ENCODE measurements at regions of chr9 and their contacts with region 1.

Region 1: DNA sequence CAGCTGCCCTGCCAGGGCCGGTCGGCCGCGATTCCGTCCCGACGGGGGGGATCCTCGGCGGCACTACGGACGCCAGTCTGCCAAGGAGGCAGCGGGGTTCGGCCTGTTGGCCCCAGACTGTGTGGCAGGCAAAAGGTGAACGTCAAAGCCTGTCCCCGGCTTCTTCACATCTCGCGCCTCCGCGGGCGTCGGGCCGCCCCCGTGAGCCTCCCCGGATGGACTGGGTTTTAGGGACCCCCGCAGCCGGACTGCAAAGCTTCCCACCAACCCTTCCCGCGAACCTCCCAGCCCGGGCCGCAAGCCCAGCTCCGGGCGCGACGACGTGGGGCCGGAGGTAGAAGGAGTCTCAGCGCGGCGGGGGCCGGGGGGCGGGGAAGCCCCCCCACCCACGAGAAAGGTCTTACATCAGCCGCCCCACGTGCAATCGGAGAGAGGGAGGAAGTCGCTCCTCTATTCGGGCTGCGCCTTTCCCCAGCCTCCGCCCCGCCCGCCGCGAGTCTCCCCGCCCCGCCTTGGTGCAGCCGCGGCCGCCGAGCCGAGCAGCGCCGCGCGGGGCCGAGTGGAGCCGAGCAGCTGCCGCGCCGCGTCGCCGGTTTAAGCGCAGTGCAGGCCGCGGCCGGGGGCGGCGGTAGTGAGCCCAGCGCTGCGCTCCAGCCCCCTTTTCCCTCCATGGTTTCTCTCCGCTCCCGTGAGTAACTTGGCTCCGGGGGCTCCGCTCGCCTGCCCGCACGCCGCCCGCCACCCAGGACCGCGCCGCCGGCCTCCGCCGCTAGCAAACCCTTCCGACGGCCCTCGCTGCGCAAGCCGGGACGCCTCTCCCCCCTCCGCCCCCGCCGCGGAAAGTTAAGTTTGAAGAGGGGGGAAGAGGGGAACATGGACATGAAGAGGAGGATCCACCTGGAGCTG is at the start of gene ANP32B:
- DNase-seq: peak; percentile 98
- ATAC-seq: peak; percentile 89
- H3K4me3 Mint-ChIP-seq: peak within 1 kb of the TSS; percentile 81
- H3K27ac Mint-ChIP-seq: peak within 1 kb of the TSS; percentile 92
- H3K4me1 Mint-ChIP-seq: peaks cover 49% of the 10 kb centered on the region
- H3K27me3 Mint-ChIP-seq: no peaks in the 10 kb centered on the region
- total RNA-seq, gene ANP32B: 367 to 440 TPM

Region 2: DNA sequence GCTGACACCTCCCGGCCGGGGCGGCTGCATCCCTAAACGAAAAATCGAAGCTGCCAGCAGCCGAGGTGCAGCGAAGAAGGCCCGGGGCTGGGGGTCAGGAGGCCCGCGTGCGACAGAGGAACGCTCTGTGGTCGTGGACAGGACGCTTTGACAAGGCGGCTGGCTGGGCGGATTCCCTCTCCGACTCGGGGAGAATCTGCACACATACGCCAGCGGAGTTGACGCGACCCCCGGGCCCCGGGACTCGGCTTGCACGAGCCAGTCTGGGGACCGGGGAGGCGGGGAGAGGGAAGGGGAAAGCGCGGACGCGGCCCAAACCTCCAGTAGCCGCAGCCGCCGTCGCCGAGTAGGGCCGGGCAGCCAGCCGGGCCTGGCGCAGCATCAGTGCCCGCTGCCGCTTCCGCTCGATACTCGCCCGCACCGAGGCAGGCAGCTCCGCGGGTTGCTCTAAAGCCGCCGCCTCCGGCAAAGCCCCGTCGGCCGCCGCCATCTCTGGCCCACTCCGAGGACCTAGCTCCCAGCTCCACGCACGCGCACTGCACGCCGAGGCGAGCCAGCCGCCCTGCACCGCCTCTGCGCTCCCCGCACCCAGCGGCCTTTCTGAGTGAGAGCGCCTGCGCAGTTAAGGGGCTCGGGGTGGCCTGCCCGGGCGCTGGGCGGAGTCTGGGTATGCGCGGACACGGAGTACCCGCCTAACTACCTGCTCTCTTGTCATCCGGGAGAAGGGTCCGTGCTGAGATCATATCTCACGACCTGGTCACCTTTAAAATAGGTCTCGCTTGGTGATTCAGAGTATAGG is 285.9 kb before region 1 on chr9 and contains the start of gene XPA:
- CTCF ChIA-PET with region 1: no interaction called
- POLR2A ChIA-PET with region 1: no interaction called
- intact Hi-C with region 1: loop called (anchors 1 to 10 kb)
- DNase-seq: peak; percentile 98
- ATAC-seq: peak; percentile 95
- H3K4me3 Mint-ChIP-seq: peak within 1 kb of the TSS; percentile 81
- H3K27ac Mint-ChIP-seq: peak within 1 kb of the TSS; percentile 92
- H3K4me1 Mint-ChIP-seq: peaks cover 45% of the 10 kb centered on the region
- H3K27me3 Mint-ChIP-seq: peaks cover 2% of the 10 kb centered on the region
- total RNA-seq, gene XPA: 8.7 to 11.1 TPM

Region 3: GRCh38 chr9:98007251-98007928 is 24.5 kb after region 1 on chr9:
- CTCF ChIA-PET with region 1: interaction called, 6 read pairs
- POLR2A ChIA-PET with region 1: no interaction called
- intact Hi-C with region 1: loop called in 1 of 2 experiments (anchors 2 kb)
- DNase-seq: no peak
- ATAC-seq: peak; percentile 67
- H3K4me3 Mint-ChIP-seq: no peak overlapping the region
- H3K27ac Mint-ChIP-seq: peak overlapping the region; percentile 53
- H3K4me1 Mint-ChIP-seq: peaks cover 42% of the 10 kb centered on the region
- H3K27me3 Mint-ChIP-seq: no peaks in the 10 kb centered on the region

Region 4: DNA sequence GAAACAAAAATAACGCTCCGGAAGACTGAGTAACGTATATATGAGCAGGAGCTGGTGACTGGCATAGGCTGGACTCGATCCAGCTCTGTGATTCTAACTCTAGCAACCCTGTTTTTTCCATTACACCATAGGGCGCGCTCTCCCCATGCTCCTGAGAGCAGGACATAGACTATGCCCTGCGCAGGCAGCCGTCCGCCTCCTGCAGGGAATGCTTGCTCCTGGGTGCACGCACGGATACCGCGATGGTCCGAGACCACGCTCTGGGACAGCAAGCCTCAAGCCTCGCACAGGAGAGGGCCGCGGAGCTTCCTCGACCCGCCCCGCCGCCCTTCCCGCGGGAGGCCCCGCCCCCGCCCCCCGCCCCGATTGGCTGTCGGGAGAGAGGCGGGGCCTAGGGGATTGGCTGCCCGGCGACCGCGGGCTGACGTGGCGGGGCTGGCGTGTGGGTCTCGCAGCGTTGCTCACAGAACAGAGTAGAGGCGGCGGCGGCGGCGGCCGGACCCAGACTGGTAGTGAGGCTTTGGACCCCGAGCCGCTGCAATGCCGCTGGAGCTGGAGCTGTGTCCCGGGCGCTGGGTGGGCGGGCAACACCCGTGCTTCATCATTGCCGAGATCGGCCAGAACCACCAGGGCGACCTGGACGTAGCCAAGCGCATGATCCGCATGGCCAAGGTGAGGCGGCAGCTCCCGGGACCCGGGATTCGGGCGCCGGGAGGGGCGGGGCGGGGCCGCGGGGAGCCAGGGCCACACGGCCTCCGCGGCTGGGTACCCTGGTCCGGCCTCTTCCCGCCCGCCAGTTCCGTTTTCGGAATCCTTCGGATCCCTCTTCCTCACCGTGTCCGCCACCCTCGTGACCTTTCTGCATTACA is 73.6 kb after region 1 on chr9 and contains the start of gene NANS:
- CTCF ChIA-PET with region 1: interaction called, 4 read pairs
- POLR2A ChIA-PET with region 1: interaction called, 7 read pairs
- intact Hi-C with region 1: loop called (anchors 1 to 5 kb)
- DNase-seq: peak; percentile 97
- ATAC-seq: peak; percentile 94
- H3K4me3 Mint-ChIP-seq: peak within 1 kb of the TSS; percentile 94
- H3K27ac Mint-ChIP-seq: peak within 1 kb of the TSS; percentile 98
- H3K4me1 Mint-ChIP-seq: peaks cover 28% of the 10 kb centered on the region
- H3K27me3 Mint-ChIP-seq: no peaks in the 10 kb centered on the region
- total RNA-seq, gene NANS: 45.9 to 47.7 TPM

Region 5: GRCh38 chr9:98192503-98193335 is 209.8 kb after region 1 on chr9 and contains the start of gene CORO2A:
- CTCF ChIA-PET with region 1: no interaction called
- POLR2A ChIA-PET with region 1: no interaction called
- intact Hi-C with region 1: loop called in 1 of 2 experiments (anchors 1 kb)
- DNase-seq: peak; percentile 83
- ATAC-seq: peak; percentile 78
- H3K4me3 Mint-ChIP-seq: peak within 1 kb of the TSS; percentile 78
- H3K27ac Mint-ChIP-seq: peak within 1 kb of the TSS; percentile 65
- H3K4me1 Mint-ChIP-seq: peaks cover 26% of the 10 kb centered on the region
- H3K27me3 Mint-ChIP-seq: no peaks in the 10 kb centered on the region
- total RNA-seq, gene CORO2A: 9.7 to 10.3 TPM

Region 6: GRCh38 chr9:99906403-99907207 is 1923.7 kb after region 1 on chr9 and contains the start of gene STX17:
- CTCF ChIA-PET with region 1: no interaction called
- POLR2A ChIA-PET with region 1: no interaction called
- intact Hi-C with region 1: loop called in 1 of 2 experiments (anchors 5 kb)
- DNase-seq: peak; percentile 85
- ATAC-seq: peak; percentile 92
- H3K4me3 Mint-ChIP-seq: peak within 1 kb of the TSS; percentile 97
- H3K27ac Mint-ChIP-seq: peak within 1 kb of the TSS; percentile 96
- H3K4me1 Mint-ChIP-seq: peaks cover 26% of the 10 kb centered on the region
- H3K27me3 Mint-ChIP-seq: peaks cover 2% of the 10 kb centered on the region
- total RNA-seq, gene STX17: 32.8 to 35.2 TPM

Measured in activated CD4-positive, alpha-beta T cell treated with anti-CD3 and anti-CD28 coated beads for 36 hours (primary cell).